MCF 10A (cell line): ENCODE measurements at regions of chr22 and their contacts with region 1.

Region 1: GRCh38 chr22:40922484-40923303 is 28.5 kb upstream of the RBX1 start:
- DNase-seq: peak; percentile 66
- H3K4me3 Mint-ChIP-seq: no peak overlapping the region
- H3K27ac Mint-ChIP-seq: no peak overlapping the region
- H3K4me1 Mint-ChIP-seq: peaks cover 5% of the 10 kb centered on the region
- H3K27me3 Mint-ChIP-seq: no peaks in the 10 kb centered on the region
- CTCF ChIP-seq: peak; percentile 64

Region 2: DNA sequence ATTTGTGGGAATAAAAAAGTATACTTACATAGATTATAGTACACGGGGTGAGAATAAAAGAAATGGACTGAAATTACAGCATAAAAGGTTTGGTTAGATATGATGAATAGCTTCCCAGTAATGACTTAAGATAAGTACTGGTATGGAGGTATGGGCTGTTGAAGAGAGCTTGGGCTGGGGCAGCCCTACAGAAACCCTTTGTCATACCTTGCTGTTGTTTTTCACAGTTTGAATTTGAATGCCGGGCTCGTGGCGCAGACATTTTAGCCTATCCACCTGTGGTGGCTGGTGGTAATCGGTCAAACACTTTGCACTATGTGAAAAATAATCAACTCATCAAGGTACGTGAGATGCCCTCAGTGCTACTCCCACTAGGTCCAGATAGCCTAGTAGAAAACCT is 13.8 kb before region 1 on chr22:
- CTCF ChIA-PET with region 1: interaction called, 24 read pairs
- POLR2A ChIA-PET with region 1: interaction called, 5 read pairs
- intact Hi-C with region 1: no loop called
- DNase-seq: no peak
- H3K4me3 Mint-ChIP-seq: no peak overlapping the region
- H3K27ac Mint-ChIP-seq: no peak overlapping the region
- H3K4me1 Mint-ChIP-seq: peaks cover 6% of the 10 kb centered on the region
- H3K27me3 Mint-ChIP-seq: no peaks in the 10 kb centered on the region
- CTCF ChIP-seq: no peak

Region 3: GRCh38 chr22:41157083-41157482 is 234.4 kb after region 1 on chr22:
- CTCF ChIA-PET with region 1: interaction called, 5 read pairs
- POLR2A ChIA-PET with region 1: no interaction called
- intact Hi-C with region 1: loop called (anchors 10 kb)
- DNase-seq: no peak
- H3K4me3 Mint-ChIP-seq: no peak overlapping the region
- H3K27ac Mint-ChIP-seq: no peak overlapping the region
- H3K4me1 Mint-ChIP-seq: no peaks in the 10 kb centered on the region
- H3K27me3 Mint-ChIP-seq: no peaks in the 10 kb centered on the region
- CTCF ChIP-seq: no peak

Region 4: DNA sequence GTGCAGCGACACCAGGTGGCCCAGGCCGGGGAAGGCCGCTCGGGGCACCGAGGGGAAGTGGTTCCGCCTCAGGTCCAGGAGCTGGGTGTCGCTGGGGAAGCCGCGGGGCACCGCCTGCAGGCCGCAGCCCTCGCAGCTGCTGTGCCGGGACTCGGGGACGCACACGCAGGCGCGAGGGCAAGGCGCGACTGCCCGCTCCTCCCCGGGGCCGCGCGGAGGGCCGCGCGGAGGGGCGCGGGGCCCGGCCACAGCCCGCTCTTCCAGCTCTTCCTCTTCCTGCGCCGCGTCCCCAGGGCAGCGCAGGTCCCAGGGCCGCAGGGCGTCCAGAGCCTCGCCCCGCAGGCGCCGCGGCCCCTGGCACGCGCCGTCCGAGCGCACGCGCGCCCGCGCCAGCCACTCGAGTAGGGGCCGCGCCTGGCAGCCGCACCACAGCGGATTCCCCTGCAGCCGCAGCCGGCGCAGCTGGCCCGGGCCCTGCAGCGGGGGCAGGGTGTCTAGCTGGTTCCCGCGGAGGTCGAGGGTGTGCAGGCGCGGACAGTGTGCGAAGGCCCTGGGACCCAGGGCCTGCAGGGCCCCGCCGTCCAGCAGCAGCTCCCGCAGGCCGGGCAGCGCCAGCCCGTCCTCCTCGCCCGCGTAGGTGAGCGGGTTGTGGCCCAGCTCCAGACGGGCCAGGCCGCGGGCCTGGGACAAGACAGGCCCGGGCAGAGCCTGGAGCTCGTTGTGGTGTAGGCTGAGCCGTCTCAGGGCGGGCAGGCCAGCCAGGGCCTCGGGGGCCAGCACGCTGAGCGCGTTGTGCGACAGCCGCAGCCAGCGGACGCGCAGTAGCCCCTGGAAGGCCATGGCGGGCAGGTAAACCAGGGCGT is 315.2 kb after region 1 on chr22:
- CTCF ChIA-PET with region 1: interaction called, 37 read pairs
- POLR2A ChIA-PET with region 1: interaction called, 10 read pairs
- intact Hi-C with region 1: loop called (anchors 2 kb)
- DNase-seq: peak; percentile 67
- H3K4me3 Mint-ChIP-seq: peak overlapping the region; percentile 33
- H3K27ac Mint-ChIP-seq: no peak overlapping the region
- H3K4me1 Mint-ChIP-seq: no peaks in the 10 kb centered on the region
- H3K27me3 Mint-ChIP-seq: no peaks in the 10 kb centered on the region
- CTCF ChIP-seq: peak; percentile 56